ENCODE measurements at regions of chr22 and their contacts with region 1.

Region 1: DNA sequence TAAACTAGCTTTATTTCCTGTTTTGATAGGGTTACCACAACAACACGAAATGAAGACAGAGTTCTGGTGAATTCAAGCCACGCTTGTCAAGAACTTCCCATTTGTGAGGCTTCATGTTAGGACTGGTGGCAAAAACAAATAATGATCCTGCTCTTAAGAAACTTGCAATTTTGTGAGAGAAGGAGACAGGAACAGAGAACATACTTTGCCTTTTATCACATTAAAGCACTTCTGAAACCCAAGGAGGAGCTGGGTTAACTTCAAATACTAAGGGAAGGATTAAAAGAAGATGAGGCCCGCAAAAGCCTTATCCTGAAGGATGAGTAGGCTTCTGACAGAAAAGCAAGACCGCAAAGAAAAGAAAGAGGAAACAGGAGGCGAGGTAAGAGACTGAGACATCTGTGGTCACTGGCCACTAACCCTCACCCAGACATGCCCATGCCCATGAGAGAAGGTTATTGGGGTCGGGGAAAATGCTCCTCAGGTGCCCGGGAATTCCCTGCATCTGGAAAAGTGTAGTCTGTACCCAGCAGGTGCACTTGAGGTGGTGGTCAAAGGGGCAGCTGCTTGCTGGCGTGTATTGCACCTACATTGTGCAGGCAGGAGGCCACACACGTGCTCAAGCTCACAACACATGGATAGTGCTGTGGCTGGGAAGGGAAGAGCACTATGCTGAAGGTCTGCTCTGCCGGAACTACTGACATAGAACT is 50.5 kb downstream of the MAPK1 start:
- DNase-seq: no peak
- ATAC-seq: peak; percentile 79

Region 2: DNA sequence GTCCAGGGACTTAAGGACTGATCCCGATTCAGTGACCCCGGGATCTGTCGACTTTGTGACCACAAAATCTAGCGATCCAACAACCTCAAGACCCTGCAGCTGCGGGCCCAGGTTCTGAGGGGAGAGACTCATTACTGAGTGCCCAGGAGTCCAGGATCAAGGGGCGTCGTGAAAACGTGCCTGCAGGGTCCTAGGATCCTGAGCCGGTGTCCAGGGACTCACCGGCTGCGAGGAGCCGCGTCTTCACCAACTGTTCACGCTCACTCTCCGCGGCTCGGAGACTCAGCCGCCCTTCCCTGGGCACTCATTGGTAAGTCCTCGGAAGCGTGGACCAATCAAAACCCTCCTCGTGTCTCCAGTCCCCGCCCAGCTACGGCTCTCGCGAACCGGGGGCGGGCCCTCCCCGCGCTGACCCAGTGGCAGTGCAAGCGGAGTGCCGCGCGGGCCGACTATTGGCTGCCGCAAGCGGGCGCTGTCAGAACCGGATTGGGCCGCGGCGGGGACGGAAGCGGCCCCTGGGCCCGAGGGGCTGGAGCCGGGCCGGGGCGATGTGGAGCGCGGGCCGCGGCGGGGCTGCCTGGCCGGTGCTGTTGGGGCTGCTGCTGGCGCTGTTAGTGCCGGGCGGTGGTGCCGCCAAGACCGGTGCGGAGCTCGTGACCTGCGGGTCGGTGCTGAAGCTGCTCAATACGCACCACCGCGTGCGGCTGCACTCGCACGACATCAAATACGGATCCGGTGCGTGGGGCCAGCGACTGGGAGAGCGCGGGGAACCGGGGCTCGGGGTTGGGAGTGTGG is 175.0 kb before region 1 on chr22 and contains the start of gene SDF2L1:
- intact Hi-C with region 1: no loop called
- DNase-seq: peak; percentile 99
- ATAC-seq: peak; percentile 100
- total RNA-seq, gene SDF2L1: 20.4 TPM

Region 3: GRCh38 chr22:21735200-21736076 is 81.5 kb before region 1 on chr22 and contains the start of gene YPEL1:
- intact Hi-C with region 1: no loop called
- DNase-seq: peak; percentile 98
- ATAC-seq: peak; percentile 99
- total RNA-seq, gene YPEL1: 3.1 TPM

Region 4: DNA sequence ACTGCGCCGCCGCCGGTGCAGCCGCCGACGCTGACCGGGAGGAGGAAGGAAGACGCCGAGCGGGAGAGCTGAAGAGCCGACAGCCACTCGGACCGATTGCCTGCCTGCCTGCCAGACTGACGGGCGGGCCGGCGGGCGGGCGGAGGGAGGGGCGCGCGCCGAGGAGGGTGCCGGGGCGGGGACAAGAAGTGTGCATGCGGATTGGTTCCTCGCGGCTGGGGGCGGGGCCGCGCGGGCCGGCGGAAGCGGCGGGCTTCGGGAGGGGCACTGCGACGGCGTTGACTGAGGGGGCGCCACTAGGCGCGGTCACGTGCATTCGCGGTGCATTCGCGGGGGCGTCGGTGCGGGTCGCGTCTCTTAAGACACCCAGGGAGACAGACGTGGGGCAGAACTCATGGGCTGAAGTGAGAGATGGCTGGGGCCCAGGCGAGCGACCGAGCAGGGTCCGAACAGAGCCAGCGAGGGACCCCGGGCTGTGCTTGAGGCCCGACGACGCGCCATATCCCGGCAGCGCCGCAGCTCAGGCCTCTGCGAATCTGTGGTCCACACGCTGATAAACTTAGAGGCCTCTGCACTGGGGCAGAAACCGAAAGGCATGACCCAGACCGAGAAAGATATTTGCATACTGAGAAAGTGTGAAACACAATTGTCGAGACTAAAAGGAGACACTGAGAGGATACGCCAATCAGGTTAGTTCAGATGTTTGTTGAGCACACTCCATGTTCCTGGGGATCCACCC is 50.8 kb after region 1 on chr22 and contains the start of gene MAPK1:
- intact Hi-C with region 1: loop called (anchors 10 kb)
- DNase-seq: peak; percentile 96
- ATAC-seq: peak; percentile 99
- total RNA-seq, gene MAPK1: 75.2 TPM

Measured in Right ventricle myocardium superior (tissue), 1 donor.